HepG2 (cell line): ENCODE measurements at regions of chr7 and their contacts with region 1.

Region 1: GRCh38 chr7:94643771-94644540 is 12.0 kb downstream of the SGCE start:
- DNase-seq: no peak
- ATAC-seq: no peak
- H3K4me3 ChIP-seq: no peak overlapping the region
- H3K27ac ChIP-seq: peak overlapping the region; percentile 79
- H3K4me1 ChIP-seq: peaks cover 97% of the 10 kb centered on the region
- H3K27me3 ChIP-seq: no peaks in the 10 kb centered on the region
- CTCF ChIP-seq: no peak
- EP300 ChIP-seq: no peak
- POLR2A ChIP-seq: no peak
- RAD21 ChIP-seq: no peak

Region 2: DNA sequence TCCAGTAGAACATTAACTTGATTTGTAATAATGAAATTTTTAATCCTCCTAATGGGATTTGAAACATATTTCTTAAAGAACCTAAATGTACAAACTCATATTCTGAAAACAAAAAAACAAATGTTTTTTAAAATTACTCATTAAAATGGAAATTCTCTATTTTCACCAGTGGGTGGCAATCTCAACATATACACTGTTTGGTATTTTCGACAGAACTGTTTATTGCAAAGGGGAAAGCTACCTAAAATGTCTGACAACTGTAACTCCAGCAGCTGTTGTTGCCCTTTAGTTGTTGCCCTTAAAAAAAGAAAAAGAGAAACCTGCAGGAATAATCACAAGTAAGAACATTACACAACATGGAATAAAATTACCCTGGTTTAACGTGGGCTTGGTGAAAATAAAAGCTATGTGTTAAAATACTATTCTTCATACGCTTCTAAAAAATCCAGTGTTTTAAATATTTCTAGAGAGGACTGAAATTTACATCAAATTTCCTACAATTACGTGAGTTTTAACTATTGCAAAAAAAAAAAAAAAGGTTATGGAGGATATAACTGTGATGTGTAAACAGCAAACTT is 194.7 kb before region 1 on chr7:
- CTCF ChIA-PET with region 1: no interaction called
- POLR2A ChIA-PET with region 1: no interaction called
- in situ Hi-C with region 1: no loop called
- intact Hi-C with region 1: no loop called
- DNase-seq: peak; percentile 45
- ATAC-seq: no peak
- H3K4me3 ChIP-seq: no peak overlapping the region
- H3K27ac ChIP-seq: no peak overlapping the region
- H3K4me1 ChIP-seq: peaks cover 57% of the 10 kb centered on the region
- H3K27me3 ChIP-seq: no peaks in the 10 kb centered on the region
- CTCF ChIP-seq: peak; percentile 63
- EP300 ChIP-seq: no peak
- POLR2A ChIP-seq: no peak
- RAD21 ChIP-seq: peak; percentile 68

Region 3: GRCh38 chr7:94561841-94562514 is 82.0 kb before region 1 on chr7:
- CTCF ChIA-PET with region 1: no interaction called
- POLR2A ChIA-PET with region 1: no interaction called
- in situ Hi-C with region 1: no loop called
- intact Hi-C with region 1: loop called (anchors 5 kb)
- DNase-seq: peak; percentile 97
- ATAC-seq: peak; percentile 95
- H3K4me3 ChIP-seq: no peak overlapping the region
- H3K27ac ChIP-seq: peak overlapping the region; percentile 73
- H3K4me1 ChIP-seq: peaks cover 41% of the 10 kb centered on the region
- H3K27me3 ChIP-seq: no peaks in the 10 kb centered on the region
- CTCF ChIP-seq: no peak
- EP300 ChIP-seq: peak; percentile 45 to 97; a peak in 2 of 4 replicates
- POLR2A ChIP-seq: no peak
- RAD21 ChIP-seq: no peak

Region 4: DNA sequence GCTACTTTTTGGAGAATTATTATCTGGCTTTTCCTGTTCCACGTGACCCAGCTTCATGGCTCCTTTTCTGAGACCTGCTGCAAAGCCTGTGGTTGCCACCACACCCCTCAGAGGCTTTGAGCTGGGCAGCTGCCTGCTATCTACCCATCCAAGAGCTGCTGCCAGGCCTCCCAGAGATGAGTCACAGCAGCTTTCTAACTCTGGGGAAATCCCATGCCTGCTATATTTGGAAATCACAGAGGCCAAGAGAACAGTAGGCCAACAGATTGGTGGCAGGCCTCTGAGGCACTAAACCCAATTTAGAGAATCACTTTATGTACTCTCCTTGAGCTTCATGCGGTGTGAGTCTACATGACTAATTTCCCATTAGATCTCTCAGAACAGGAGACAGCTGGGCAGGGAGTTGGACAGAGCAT is 23.2 kb before region 1 on chr7:
- CTCF ChIA-PET with region 1: no interaction called
- POLR2A ChIA-PET with region 1: interaction called, 11 read pairs
- in situ Hi-C with region 1: no loop called
- intact Hi-C with region 1: loop called (anchors 1 kb)
- DNase-seq: peak; percentile 82
- ATAC-seq: peak; percentile 94
- H3K4me3 ChIP-seq: no peak overlapping the region
- H3K27ac ChIP-seq: peak overlapping the region; percentile 30
- H3K4me1 ChIP-seq: peaks cover 48% of the 10 kb centered on the region
- H3K27me3 ChIP-seq: no peaks in the 10 kb centered on the region
- CTCF ChIP-seq: no peak
- EP300 ChIP-seq: peak in 1 of 2 experiments; percentile 61; a peak in 1 of 4 replicates
- POLR2A ChIP-seq: no peak
- RAD21 ChIP-seq: no peak

Region 5: DNA sequence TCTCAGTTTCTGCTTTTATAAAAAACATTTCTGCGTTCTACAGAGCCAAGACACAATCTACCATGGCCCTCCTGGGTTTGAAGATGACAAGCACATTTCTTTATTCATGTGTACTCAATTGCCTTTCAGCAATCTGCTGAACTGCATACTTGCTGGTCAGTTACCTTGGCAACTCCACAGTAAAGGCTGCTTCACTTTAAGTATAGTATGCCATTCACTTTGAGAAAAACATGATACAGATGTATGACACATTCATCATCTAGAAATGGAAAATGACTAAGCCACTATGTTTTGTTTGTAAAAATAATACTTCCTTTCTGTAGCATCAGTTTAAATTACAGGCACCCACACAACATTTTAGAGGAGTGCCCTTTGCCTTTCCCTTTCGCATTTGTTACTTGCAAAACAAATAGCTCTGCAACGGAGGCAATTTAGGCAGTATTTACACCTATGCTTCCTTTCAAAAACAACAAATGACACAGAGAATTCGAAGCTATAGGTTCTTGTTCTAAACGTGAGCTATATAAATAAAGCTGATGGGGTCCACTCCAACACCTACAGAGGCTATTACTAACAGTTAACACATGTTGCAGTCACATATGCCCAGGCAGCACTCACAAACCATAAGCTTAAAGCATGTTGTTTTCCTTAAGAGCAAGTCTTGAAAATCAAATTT is 11.5 kb before region 1 on chr7:
- CTCF ChIA-PET with region 1: no interaction called
- POLR2A ChIA-PET with region 1: interaction called, 10 read pairs
- in situ Hi-C with region 1: no loop called
- intact Hi-C with region 1: no loop called
- DNase-seq: no peak
- ATAC-seq: peak; percentile 72
- H3K4me3 ChIP-seq: peak overlapping the region in 1 of 3 experiments; percentile 3; a peak in 1 of 6 replicates
- H3K27ac ChIP-seq: peak overlapping the region; percentile 69
- H3K4me1 ChIP-seq: peaks cover 77% of the 10 kb centered on the region
- H3K27me3 ChIP-seq: no peaks in the 10 kb centered on the region
- CTCF ChIP-seq: no peak
- EP300 ChIP-seq: no peak
- POLR2A ChIP-seq: no peak
- RAD21 ChIP-seq: no peak